Thyroid gland (tissue), 4 donors: ENCODE measurements at regions of chr12 and their contacts with region 1.

Region 1: DNA sequence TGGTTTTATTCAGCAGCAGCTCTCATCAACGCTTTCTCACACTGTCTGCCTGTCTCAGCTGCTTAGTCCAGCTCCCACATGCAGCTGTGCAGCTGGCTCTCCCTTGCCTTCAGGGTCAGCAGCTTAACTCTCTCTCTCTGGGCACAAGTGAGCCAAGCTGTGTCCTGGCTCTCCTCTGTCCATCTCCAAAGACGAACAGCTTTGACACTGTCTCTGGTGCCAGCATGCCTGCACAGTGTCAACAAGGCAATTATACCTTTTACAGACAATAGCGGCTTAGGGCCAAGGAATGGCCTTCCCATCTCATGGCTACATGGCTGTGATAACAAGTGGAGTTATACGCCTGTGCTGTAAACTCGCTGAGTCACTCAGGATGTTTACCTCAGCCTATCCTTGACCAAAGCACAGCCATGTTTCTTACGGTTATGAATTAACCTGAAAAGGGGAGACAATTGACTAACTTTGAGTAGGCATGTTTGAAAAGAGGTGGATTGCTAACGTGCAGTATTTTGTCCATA is 38.4 kb upstream of the MANSC4 start:
- DNase-seq: no peak
- H3K4me3 ChIP-seq: no peak overlapping the region
- H3K27ac ChIP-seq: no peak overlapping the region
- H3K4me1 ChIP-seq: no peaks in the 10 kb centered on the region
- H3K27me3 ChIP-seq: no peaks in the 10 kb centered on the region
- CTCF ChIP-seq: no peak
- POLR2A ChIP-seq: no peak

Region 2: DNA sequence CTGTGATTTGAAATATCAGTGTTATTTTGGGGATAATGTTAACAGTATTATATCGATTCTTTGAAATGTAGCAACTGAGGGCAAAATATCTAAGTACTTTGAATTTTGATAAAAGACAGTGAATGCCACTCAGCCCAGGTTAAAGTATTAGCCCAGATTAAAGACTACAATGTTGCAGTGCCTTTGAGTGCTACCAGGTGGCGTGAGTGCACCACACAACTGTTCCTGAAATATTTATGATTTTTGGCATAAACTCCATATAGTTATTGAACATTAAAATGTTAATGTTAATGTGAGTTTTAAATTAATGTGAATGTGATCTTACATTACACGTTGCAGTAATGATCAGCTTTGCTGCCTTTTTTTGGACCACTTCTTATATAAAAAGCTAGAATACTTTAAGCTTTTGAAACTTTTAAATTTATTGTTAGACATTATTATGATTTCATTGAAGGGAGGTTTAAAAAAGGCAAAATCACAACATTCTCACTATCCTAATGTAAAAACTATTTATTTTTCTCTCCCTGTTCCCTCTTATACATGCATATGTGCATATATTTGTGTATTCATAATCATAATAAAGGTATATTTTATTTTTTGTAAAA is 85.3 kb before region 1 on chr12:
- intact Hi-C with region 1: loop called (anchors 10 kb)
- DNase-seq: peak; percentile 14 to 29
- H3K4me3 ChIP-seq: no peak overlapping the region
- H3K27ac ChIP-seq: no peak overlapping the region
- H3K4me1 ChIP-seq: no peaks in the 10 kb centered on the region
- H3K27me3 ChIP-seq: no peaks in the 10 kb centered on the region
- CTCF ChIP-seq: peak; percentile 15 to 79 (median 73)
- POLR2A ChIP-seq: no peak